ENCODE measurements at regions of chr11 and their contacts with region 1.

Region 1: GRCh38 chr11:74321487-74322188 is 10.2 kb upstream of the P4HA3 start:
- DNase-seq: peak in 1 of 10 donors; percentile 8
- H3K4me3 ChIP-seq: no peak overlapping the region
- H3K27ac ChIP-seq: no peak overlapping the region
- H3K27me3 ChIP-seq: no peaks in the 10 kb centered on the region
- CTCF ChIP-seq: peak in 52 of 56 donors; percentile 9 to 59 (median 44)

Region 2: DNA sequence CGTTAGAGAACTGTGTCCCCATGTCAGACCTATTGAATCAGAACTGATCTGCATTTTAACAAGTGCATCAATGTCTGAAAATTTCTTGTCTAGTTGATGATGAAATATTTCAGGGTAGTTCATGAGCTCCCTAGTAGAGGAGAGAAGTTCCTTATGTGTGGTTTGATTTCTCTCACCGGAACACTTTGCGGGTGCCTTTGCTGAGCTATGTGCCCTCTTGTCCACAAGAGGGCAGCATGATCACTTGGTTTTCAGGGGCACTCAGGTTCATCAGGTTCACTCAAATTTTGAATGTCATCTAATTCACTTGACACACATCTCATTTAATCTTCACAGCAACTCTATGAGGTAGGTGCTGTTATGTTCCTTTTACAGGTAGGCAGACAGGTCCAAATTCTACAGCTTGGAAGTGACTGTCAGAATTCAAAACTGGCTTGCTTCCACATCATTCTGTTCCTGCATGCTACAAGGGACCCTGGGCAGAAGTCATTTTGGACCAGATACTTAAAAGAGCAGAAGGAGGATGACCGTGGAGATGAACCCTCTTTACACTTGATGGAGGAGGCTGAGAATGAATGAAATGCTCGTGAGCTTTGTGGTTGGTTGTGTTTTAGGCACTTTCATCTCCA is 65.8 kb before region 1 on chr11:
- intact Hi-C with region 1: loop called in 1 of 2 experiments (anchors 10 kb)
- DNase-seq: peak in 7 of 10 donors; percentile 7 to 58 (median 43)
- H3K4me3 ChIP-seq: no peak overlapping the region
- H3K27ac ChIP-seq: no peak overlapping the region
- H3K27me3 ChIP-seq: no peaks in the 10 kb centered on the region
- CTCF ChIP-seq: peak; percentile 72 to 97 (median 92)

Measured in dorsolateral prefrontal cortex (tissue), 120 donors.